ENCODE measurements at regions of chr9 and their contacts with region 1.

Region 1: GRCh38 chr9:129626079-129626624 is at the start of gene NTMT1:
- DNase-seq: peak; percentile 81 to 89
- H3K4me3 ChIP-seq: peak within 1 kb of the TSS; percentile 56
- H3K4me3 Mint-ChIP-seq: peak within 1 kb of the TSS; percentile 90
- H3K27ac Mint-ChIP-seq: peak within 1 kb of the TSS; percentile 81
- H3K4me1 ChIP-seq: peaks cover 11% of the 10 kb centered on the region
- H3K4me1 Mint-ChIP-seq: peaks cover 2% of the 10 kb centered on the region
- H3K27me3 ChIP-seq: no peaks in the 10 kb centered on the region
- H3K27me3 Mint-ChIP-seq: no peaks in the 10 kb centered on the region
- CTCF ChIP-seq: no peak
- total RNA-seq, gene NTMT1: 44.1 and 51.6 TPM in 2 replicates

Region 2: GRCh38 chr9:129131300-129132145 is 494.6 kb before region 1 on chr9:
- CTCF ChIA-PET with region 1: interaction called, 27 read pairs
- POLR2A ChIA-PET with region 1: no interaction called
- intact Hi-C with region 1: no loop called
- DNase-seq: peak; percentile 71 to 85
- H3K4me3 ChIP-seq: no peak overlapping the region
- H3K4me3 Mint-ChIP-seq: no peak overlapping the region
- H3K27ac Mint-ChIP-seq: no peak overlapping the region
- H3K4me1 ChIP-seq: no peaks in the 10 kb centered on the region
- H3K4me1 Mint-ChIP-seq: no peaks in the 10 kb centered on the region
- H3K27me3 ChIP-seq: no peaks in the 10 kb centered on the region
- H3K27me3 Mint-ChIP-seq: no peaks in the 10 kb centered on the region
- CTCF ChIP-seq: peak; percentile 92 to 97

Region 3: GRCh38 chr9:129139993-129140396 is 486.2 kb before region 1 on chr9:
- CTCF ChIA-PET with region 1: interaction called, 11 read pairs
- POLR2A ChIA-PET with region 1: no interaction called
- intact Hi-C with region 1: no loop called
- DNase-seq: peak; percentile 41 to 85
- H3K4me3 ChIP-seq: peak overlapping the region; percentile 21
- H3K4me3 Mint-ChIP-seq: peak overlapping the region; percentile 64
- H3K27ac Mint-ChIP-seq: peak overlapping the region; percentile 95
- H3K4me1 ChIP-seq: peaks cover 51% of the 10 kb centered on the region
- H3K4me1 Mint-ChIP-seq: peaks cover 29% of the 10 kb centered on the region
- H3K27me3 ChIP-seq: no peaks in the 10 kb centered on the region
- H3K27me3 Mint-ChIP-seq: no peaks in the 10 kb centered on the region
- CTCF ChIP-seq: peak in 1 of 2 experiments; percentile 0